Gastrocnemius medialis (tissue), 4 donors: ENCODE measurements at regions of chr1 and their contacts with region 1.

Region 1: GRCh38 chr1:45011837-45012638 is at the start of gene UROD:
- DNase-seq: peak; percentile 88 to 93
- ATAC-seq: peak; percentile 86 to 90
- H3K4me3 ChIP-seq: peak within 1 kb of the TSS; percentile 75 to 99 (median 92)
- H3K27ac ChIP-seq: peak within 1 kb of the TSS; percentile 88 to 96 (median 92)
- H3K4me1 ChIP-seq: peaks cover 39 to 44% of the 10 kb centered on the region in 2 donors
- H3K27me3 ChIP-seq: no peaks in the 10 kb centered on the region
- CTCF ChIP-seq: no peak
- POLR2A ChIP-seq: peak; percentile 34 to 75
- total RNA-seq, gene UROD: 42.6 to 68.8 (median 61.7) TPM

Region 2: GRCh38 chr1:44835738-44836675 is 176.0 kb before region 1 on chr1:
- in situ Hi-C with region 1: no loop called
- intact Hi-C with region 1: loop called (anchors 10 kb)
- DNase-seq: peak; percentile 39 to 63
- ATAC-seq: peak; percentile 57 to 77
- H3K4me3 ChIP-seq: no peak overlapping the region
- H3K27ac ChIP-seq: no peak overlapping the region
- H3K4me1 ChIP-seq: no peaks in the 10 kb centered on the region
- H3K27me3 ChIP-seq: no peaks in the 10 kb centered on the region
- CTCF ChIP-seq: peak; percentile 56 to 87 (median 69)
- POLR2A ChIP-seq: no peak

Region 3: DNA sequence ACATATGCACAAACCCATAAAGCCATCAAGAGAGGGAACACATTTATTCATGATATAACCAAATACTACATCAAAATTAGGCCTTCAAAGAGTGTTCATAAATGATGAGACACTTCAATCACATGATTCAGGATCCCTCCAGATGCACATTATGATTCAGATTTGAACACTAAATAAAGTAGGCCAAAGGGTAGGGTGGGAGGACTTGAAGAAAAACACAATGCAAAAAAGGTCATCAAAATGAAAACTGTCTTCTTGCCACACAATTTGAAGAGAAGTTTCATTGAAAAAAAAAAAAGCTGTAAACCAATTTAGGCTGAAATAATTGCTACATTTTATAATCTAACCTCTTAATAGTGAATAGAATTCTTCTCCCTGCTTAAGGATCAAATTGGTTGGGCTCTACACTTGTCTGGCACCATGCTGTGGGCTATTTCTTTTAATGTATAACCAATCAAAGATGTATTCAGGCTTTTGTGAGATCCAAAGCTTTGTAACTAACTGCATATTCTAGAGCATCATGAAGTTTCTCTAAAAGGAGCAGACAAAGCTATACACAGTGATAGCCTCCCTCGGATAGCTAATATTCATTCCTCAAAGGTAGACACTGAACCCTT is 136.3 kb after region 1 on chr1:
- in situ Hi-C with region 1: no loop called
- intact Hi-C with region 1: no loop called
- DNase-seq: no peak
- ATAC-seq: no peak
- H3K4me3 ChIP-seq: no peak overlapping the region
- H3K27ac ChIP-seq: no peak overlapping the region
- H3K4me1 ChIP-seq: no peaks in the 10 kb centered on the region
- H3K27me3 ChIP-seq: no peaks in the 10 kb centered on the region
- CTCF ChIP-seq: no peak
- POLR2A ChIP-seq: no peak

Region 4: GRCh38 chr1:45205910-45206721 is 194.1 kb after region 1 on chr1 and contains the start of gene ZSWIM5:
- in situ Hi-C with region 1: no loop called
- intact Hi-C with region 1: loop called (anchors 5 kb)
- DNase-seq: peak; percentile 23 to 34
- ATAC-seq: peak; percentile 82 to 85
- H3K4me3 ChIP-seq: peak within 1 kb of the TSS; percentile 86 to 94 (median 90)
- H3K27ac ChIP-seq: peak within 1 kb of the TSS; percentile 69 to 82 (median 82)
- H3K4me1 ChIP-seq: peaks cover 14 to 17% of the 10 kb centered on the region in 2 donors
- H3K27me3 ChIP-seq: no peaks in the 10 kb centered on the region
- CTCF ChIP-seq: no peak
- POLR2A ChIP-seq: peak; percentile 22 to 24
- total RNA-seq, gene ZSWIM5: 0.53 to 1.3 (median 0.81) TPM

Region 5: DNA sequence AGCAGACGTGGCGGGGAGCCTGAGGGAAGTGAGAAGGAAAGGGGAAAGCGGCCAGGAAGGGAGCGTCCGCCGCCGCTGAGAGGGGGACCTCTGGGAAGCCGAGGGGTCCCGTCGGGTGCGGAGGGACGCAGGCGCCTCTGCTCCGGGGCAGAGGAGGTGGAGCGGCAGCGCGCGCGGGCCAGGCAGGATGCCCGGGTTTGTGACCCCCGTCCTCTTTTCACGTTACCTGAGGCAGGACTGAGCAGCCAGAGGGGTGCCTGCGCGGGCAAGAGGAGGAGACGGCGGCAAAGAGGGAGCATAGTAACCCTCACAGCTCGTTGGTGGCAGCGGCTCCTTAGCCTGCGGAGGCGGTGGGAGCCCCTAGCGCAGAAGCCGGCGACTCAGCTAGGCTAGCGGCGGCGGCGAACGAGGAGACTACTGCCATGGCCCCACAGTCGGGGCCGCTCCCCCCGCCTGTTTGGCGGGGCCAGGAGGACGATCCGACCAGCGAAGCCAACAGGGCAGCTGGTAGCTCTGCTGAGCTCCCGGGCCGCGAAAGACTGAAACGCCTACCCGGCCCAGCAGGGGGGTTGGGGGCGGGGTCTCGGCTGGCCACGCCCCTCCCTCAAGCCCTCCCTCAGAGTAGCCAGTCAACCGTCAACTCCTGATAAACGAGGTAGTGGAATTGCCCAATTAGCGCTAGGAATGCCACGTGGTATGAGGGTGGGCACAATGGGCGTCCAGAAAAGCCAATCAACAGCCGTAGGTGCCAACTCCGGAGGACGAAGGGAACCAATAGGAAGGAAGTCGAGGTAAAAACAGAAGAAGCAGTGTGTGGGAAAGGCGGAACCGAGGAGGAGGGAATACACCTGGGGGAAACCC is 478.8 kb after region 1 on chr1 and contains the start of gene TESK2:
- in situ Hi-C with region 1: loop called (anchors 5 to 25 kb)
- intact Hi-C with region 1: loop called (anchors 2 kb)
- DNase-seq: peak; percentile 98 to 99
- ATAC-seq: peak; percentile 95 to 98
- H3K4me3 ChIP-seq: peak within 1 kb of the TSS; percentile 68 to 99 (median 90)
- H3K27ac ChIP-seq: peak within 1 kb of the TSS; percentile 87 to 96 (median 92)
- H3K4me1 ChIP-seq: peaks cover 14 to 19% of the 10 kb centered on the region in 2 donors
- H3K27me3 ChIP-seq: no peaks in the 10 kb centered on the region
- CTCF ChIP-seq: peak in 4 of 5 experiments; percentile 27 to 56 (median 30)
- POLR2A ChIP-seq: peak; percentile 89 to 92
- total RNA-seq, gene TESK2: 3.4 to 5.8 (median 4.5) TPM

Region 6: GRCh38 chr1:45569962-45570581 is 558.0 kb after region 1 on chr1:
- in situ Hi-C with region 1: loop called in 2 of 4 experiments (anchors 10 to 25 kb)
- intact Hi-C with region 1: loop called (anchors 5 kb)
- DNase-seq: peak; percentile 30 to 69
- ATAC-seq: peak; percentile 93 to 94
- H3K4me3 ChIP-seq: no peak overlapping the region
- H3K27ac ChIP-seq: no peak overlapping the region
- H3K4me1 ChIP-seq: peaks cover 0 to 5% of the 10 kb centered on the region in 2 donors
- H3K27me3 ChIP-seq: no peaks in the 10 kb centered on the region
- CTCF ChIP-seq: peak; percentile 91 to 99 (median 93)
- POLR2A ChIP-seq: no peak